MCF 10A (cell line): ENCODE measurements at regions of chr2 and their contacts with region 1.

Region 1: GRCh38 chr2:116747103-116747502 is 1067.4 kb upstream of the DDX18 start:
- DNase-seq: peak; percentile 8
- H3K4me3 Mint-ChIP-seq: no peak overlapping the region
- H3K27ac Mint-ChIP-seq: no peak overlapping the region
- H3K4me1 Mint-ChIP-seq: no peaks in the 10 kb centered on the region
- H3K27me3 Mint-ChIP-seq: peaks cover 10% of the 10 kb centered on the region
- CTCF ChIP-seq: peak; percentile 32

Region 2: DNA sequence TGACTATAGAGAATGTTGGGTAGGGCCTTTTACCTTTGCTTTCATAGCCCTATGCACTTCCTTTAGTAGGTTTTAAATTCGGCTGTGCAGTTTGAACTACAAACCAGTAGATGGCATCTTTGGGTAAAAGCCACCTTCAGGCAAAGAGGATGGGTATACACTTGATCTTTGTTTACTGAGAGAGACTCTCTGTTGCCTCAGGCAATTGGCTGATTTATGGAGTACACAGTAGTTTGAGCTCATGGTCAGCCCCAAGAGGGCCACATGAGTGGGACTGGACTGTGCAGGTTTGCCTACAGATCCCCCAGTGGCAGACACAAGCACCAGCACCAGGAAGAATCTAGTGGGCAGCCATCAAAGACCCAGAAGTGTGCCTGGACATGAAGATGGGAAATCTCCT is 236.9 kb before region 1 on chr2:
- CTCF ChIA-PET with region 1: no interaction called
- POLR2A ChIA-PET with region 1: no interaction called
- intact Hi-C with region 1: loop called (anchors 10 kb)
- DNase-seq: peak; percentile 61
- H3K4me3 Mint-ChIP-seq: no peak overlapping the region
- H3K27ac Mint-ChIP-seq: no peak overlapping the region
- H3K4me1 Mint-ChIP-seq: peaks cover 11% of the 10 kb centered on the region
- H3K27me3 Mint-ChIP-seq: no peaks in the 10 kb centered on the region
- CTCF ChIP-seq: peak; percentile 45

Region 3: DNA sequence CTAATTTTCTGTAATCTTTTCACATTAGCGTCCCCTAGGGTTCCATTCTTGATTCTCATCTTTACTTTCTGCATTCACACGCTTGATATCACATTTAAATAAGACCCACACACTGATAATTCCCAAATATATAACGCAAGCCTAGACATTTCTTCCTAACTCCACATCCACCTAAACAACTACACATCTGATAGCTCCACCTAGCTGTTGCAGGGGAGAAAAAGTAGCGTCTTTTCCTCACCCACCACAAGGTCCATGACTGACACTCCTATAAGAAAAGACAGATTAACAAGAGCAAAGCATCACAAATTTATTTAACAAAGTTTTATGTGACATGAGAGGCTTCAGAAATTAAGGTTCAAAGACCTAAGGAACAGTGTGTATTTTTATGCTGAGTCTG is 205.2 kb after region 1 on chr2:
- CTCF ChIA-PET with region 1: interaction called, 3 read pairs
- POLR2A ChIA-PET with region 1: no interaction called
- intact Hi-C with region 1: loop called (anchors 2 kb)
- DNase-seq: peak; percentile 36
- H3K4me3 Mint-ChIP-seq: no peak overlapping the region
- H3K27ac Mint-ChIP-seq: no peak overlapping the region
- H3K4me1 Mint-ChIP-seq: peaks cover 6% of the 10 kb centered on the region
- H3K27me3 Mint-ChIP-seq: no peaks in the 10 kb centered on the region
- CTCF ChIP-seq: peak; percentile 27

Region 4: DNA sequence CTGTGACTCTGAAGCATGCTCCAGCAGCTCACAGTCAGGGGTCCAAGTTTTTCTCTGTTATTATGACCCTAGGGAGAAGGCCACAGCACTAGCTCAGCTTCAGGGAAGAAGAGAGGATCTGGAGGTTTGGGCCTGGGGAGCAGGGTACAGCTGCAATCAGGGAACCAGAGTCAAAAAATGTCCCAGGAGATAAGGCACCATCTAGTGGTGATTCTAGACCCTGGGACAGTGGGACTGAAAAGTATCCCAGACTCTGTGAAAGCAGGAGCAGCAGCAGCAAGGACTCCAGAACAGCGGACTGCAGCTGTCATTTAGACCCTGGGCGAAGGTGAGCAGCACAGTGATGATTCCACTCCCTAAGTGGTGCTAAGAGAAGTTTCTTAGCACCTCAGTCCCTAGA is 789.0 kb after region 1 on chr2:
- CTCF ChIA-PET with region 1: no interaction called
- POLR2A ChIA-PET with region 1: no interaction called
- intact Hi-C with region 1: loop called (anchors 10 kb)
- DNase-seq: peak; percentile 48
- H3K4me3 Mint-ChIP-seq: no peak overlapping the region
- H3K27ac Mint-ChIP-seq: no peak overlapping the region
- H3K4me1 Mint-ChIP-seq: no peaks in the 10 kb centered on the region
- H3K27me3 Mint-ChIP-seq: no peaks in the 10 kb centered on the region
- CTCF ChIP-seq: peak; percentile 38

Region 5: GRCh38 chr2:117771969-117772630 is 1025.0 kb after region 1 on chr2:
- CTCF ChIA-PET with region 1: no interaction called
- POLR2A ChIA-PET with region 1: no interaction called
- intact Hi-C with region 1: loop called (anchors 1 kb)
- DNase-seq: peak; percentile 49
- H3K4me3 Mint-ChIP-seq: no peak overlapping the region
- H3K27ac Mint-ChIP-seq: no peak overlapping the region
- H3K4me1 Mint-ChIP-seq: peaks cover 15% of the 10 kb centered on the region
- H3K27me3 Mint-ChIP-seq: peaks cover 18% of the 10 kb centered on the region
- CTCF ChIP-seq: peak; percentile 35

Region 6: DNA sequence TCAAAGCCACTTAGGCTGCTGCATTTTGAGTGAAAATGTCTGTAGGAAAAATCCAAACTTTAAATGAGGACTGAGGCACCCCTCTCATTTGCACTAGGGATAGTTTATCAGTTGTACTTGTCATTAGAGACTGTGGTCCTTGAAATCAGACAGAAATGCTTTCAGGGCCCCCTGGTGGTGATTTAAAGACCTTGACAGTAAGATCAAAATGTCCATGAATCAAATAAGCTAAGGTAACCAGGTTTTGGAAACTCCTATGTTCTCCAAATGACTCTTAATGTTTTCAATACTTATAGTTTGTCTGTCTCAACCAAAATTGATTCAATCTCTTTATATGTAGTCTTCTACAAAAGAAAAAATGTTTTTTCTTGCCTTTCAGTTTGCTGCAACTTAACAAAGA is 1038.6 kb after region 1 on chr2:
- CTCF ChIA-PET with region 1: no interaction called
- POLR2A ChIA-PET with region 1: no interaction called
- intact Hi-C with region 1: loop called (anchors 5 kb)
- DNase-seq: peak; percentile 72
- H3K4me3 Mint-ChIP-seq: no peak overlapping the region
- H3K27ac Mint-ChIP-seq: no peak overlapping the region
- H3K4me1 Mint-ChIP-seq: no peaks in the 10 kb centered on the region
- H3K27me3 Mint-ChIP-seq: no peaks in the 10 kb centered on the region
- CTCF ChIP-seq: peak; percentile 64